ENCODE measurements at regions of chr21 and their contacts with region 1.

Region 1: GRCh38 chr21:43949499-43950208 is 62.5 kb upstream of the TRAPPC10 start:
- DNase-seq: no peak

Region 2: DNA sequence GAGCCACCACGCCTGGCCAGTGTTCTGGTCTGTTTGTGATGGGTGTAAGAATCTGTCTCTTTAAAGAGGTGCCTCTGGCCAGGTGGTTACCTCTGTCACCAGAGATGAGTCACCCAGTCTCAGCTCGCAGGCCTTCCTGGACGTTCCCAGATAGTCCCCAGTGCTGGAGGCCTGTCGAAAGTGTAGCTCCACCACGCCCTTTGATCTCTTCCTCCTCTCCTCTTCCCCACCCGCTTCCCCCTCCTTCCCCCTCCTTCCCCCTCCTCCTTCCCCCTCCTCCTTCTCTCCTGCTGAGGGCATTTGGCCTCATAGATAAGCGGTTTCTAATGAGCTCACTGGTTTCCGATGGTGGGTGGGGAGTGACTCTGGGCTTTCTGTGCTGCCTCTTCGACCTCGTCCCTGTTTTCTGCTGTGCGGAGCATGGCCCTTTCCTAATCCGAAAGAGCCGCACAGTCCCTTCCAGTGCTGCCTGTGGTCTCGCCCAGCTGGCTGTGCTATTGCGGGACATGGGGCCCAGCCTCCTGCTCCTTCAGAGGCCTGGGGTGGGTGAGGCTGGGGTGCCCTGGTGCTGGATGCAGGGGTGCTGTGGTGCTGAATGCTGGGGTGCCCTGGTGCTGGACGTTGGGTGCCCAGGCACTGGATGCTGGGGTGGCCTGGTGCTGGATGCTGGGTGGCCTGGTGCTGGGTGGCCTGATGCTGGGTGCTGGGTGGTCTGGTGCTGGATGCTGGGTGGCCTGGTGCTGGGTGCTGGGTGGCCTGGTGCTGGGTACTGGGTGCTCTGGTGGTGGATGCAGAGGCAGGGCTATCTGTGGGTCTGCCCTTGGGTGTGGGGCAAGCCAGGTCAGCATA is 65.4 kb before region 1 on chr21:
- intact Hi-C with region 1: loop called in 1 of 2 experiments (anchors 5 kb)
- DNase-seq: peak; percentile 72

Region 3: GRCh38 chr21:44051462-44051941 is 101.8 kb after region 1 on chr21:
- intact Hi-C with region 1: no loop called
- DNase-seq: no peak

Measured in posterior vena cava (tissue), 2 donors.